ENCODE measurements at regions of chr20 and their contacts with region 1.

Region 1: DNA sequence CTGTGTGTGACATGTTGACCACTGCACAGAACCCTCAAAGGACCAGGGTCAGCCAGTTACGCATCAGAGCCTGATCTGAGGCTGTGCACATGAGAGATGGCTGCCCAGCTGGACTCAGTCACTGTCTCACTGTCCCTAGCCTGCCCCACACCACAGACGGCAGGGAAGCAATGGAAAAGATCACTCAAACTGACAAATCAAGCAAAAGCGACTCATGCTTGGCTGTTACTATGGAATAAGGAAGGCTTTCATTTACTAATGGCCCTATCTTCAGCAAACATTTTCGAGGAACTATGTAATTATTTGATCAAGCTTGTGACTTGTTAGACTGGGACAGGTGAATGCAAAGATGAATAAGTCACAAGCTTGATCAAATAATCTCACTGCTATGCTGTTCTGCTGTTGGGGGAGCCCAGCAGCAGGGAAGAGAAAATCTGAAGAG is 137.0 kb downstream of the SLC23A2 start:
- DNase-seq: no peak
- H3K4me3 ChIP-seq: no peak overlapping the region
- H3K27ac ChIP-seq: no peak overlapping the region
- H3K4me1 ChIP-seq: peaks cover 3% of the 10 kb centered on the region
- H3K27me3 ChIP-seq: no peaks in the 10 kb centered on the region
- CTCF ChIP-seq: no peak

Region 2: GRCh38 chr20:4633780-4634179 is 230.6 kb before region 1 on chr20:
- CTCF ChIA-PET with region 1: no interaction called
- dilution Hi-C with region 1: no loop called
- in situ Hi-C with region 1: no loop called
- intact Hi-C with region 1: no loop called
- DNase-seq: peak; percentile 66
- H3K4me3 ChIP-seq: no peak overlapping the region
- H3K27ac ChIP-seq: peak overlapping the region; percentile 24
- H3K4me1 ChIP-seq: peaks cover 30% of the 10 kb centered on the region
- H3K27me3 ChIP-seq: no peaks in the 10 kb centered on the region
- CTCF ChIP-seq: no peak

Region 3: GRCh38 chr20:4795394-4795793 is 68.9 kb before region 1 on chr20:
- CTCF ChIA-PET with region 1: no interaction called
- dilution Hi-C with region 1: no loop called
- in situ Hi-C with region 1: no loop called
- intact Hi-C with region 1: no loop called
- DNase-seq: peak; percentile 62
- H3K4me3 ChIP-seq: no peak overlapping the region
- H3K27ac ChIP-seq: no peak overlapping the region
- H3K4me1 ChIP-seq: peaks cover 4% of the 10 kb centered on the region
- H3K27me3 ChIP-seq: no peaks in the 10 kb centered on the region
- CTCF ChIP-seq: no peak

Region 4: DNA sequence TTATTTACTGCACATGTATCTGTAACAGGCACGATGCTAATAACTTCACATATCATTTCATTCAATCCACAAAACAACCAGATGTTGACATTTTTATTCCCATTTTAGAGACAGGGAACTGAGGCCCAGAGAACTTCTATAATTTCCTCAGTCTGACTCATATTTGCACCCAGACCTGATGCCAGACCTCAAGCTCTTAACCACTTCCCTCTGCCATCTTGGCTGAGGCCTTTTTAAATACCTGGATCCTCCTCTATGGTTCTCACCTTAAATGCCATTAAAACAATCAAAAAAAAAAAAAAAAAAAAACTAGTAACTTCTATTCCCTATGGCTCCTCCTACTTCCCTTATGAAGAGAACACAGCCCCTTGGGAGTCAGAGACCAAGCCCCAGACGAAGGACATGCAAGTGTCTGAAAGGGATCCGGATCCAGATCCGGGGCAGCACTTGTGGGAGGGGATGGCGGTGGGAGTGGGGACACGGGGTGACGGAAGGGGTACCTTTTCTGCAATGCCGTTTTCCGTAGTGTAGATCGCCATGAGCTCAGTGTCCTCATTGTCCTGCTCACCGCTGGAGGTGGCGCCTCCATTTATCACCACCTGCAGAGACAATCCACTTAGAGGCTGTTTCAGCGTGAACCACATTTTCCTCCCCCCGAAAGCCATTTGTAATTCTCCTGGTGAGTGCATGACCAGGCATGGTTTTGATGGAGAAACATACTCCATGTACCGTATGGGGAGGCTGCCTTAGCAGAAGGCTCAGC is 48.2 kb after region 1 on chr20:
- CTCF ChIA-PET with region 1: interaction called, 3 read pairs
- dilution Hi-C with region 1: loop called (anchors 5 kb)
- in situ Hi-C with region 1: no loop called
- intact Hi-C with region 1: no loop called
- DNase-seq: no peak
- H3K4me3 ChIP-seq: no peak overlapping the region
- H3K27ac ChIP-seq: no peak overlapping the region
- H3K4me1 ChIP-seq: peaks cover 9% of the 10 kb centered on the region
- H3K27me3 ChIP-seq: no peaks in the 10 kb centered on the region
- CTCF ChIP-seq: no peak

Region 5: DNA sequence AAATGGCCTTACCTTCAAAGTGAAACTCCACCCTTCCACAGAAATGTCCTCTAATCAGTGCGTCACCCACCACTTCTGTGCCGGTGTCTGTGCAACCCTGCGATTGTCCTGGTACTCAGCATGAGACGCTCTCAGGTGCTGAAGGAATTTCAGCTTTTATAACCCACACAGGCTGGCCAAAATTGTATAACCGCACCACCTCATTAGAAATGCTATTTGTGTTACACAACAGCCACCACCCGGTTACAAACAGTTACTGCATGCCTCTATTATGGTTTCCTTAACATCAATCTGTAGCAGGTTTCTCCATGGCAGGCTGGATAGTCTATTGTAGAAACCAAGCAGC is 85.5 kb after region 1 on chr20:
- CTCF ChIA-PET with region 1: no interaction called
- dilution Hi-C with region 1: no loop called
- in situ Hi-C with region 1: no loop called
- intact Hi-C with region 1: loop called (anchors 1 kb)
- DNase-seq: peak; percentile 9
- H3K4me3 ChIP-seq: no peak overlapping the region
- H3K27ac ChIP-seq: no peak overlapping the region
- H3K4me1 ChIP-seq: peaks cover 16% of the 10 kb centered on the region
- H3K27me3 ChIP-seq: no peaks in the 10 kb centered on the region
- CTCF ChIP-seq: peak; percentile 49 to 61

Region 6: DNA sequence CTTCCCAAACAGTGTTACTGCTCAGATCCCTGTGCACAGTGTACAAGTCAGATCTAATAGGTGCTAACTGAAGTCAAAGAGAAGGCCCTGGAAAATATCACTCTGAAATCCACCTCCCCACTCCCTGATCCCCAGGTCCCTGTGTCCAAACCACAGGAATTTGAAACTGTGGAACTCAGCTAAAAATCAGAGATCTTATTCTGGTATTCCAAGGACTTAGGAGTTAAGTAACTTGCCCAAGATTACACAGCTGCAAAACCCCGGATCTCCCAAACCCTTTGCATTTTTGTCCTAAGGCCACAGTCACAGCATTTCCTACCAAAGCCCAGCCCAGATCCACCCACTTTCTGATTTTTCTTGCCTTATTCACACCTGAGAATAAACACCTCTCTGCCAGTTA is 169.2 kb after region 1 on chr20:
- CTCF ChIA-PET with region 1: no interaction called
- dilution Hi-C with region 1: no loop called
- in situ Hi-C with region 1: no loop called
- intact Hi-C with region 1: no loop called
- DNase-seq: peak; percentile 19
- H3K4me3 ChIP-seq: no peak overlapping the region
- H3K27ac ChIP-seq: no peak overlapping the region
- H3K4me1 ChIP-seq: no peaks in the 10 kb centered on the region
- H3K27me3 ChIP-seq: no peaks in the 10 kb centered on the region
- CTCF ChIP-seq: no peak

Measured in mammary epithelial cell (primary cell).